Tibial artery (tissue), 4 donors: ENCODE measurements at regions of chr4 and their contacts with region 1.

Region 1: GRCh38 chr4:86593688-86594558 is at the start of gene PTPN13:
- DNase-seq: peak; percentile 98 to 99
- H3K4me3 ChIP-seq: peak within 1 kb of the TSS; percentile 71 to 84
- H3K27ac ChIP-seq: peak within 1 kb of the TSS; percentile 84 to 90
- H3K4me1 ChIP-seq: peaks cover 0 to 36% (median 5%) of the 10 kb centered on the region in 4 donors
- H3K27me3 ChIP-seq: no peaks in the 10 kb centered on the region
- CTCF ChIP-seq: no peak

Region 2: GRCh38 chr4:86184901-86185285 is 409.0 kb before region 1 on chr4:
- intact Hi-C with region 1: no loop called
- DNase-seq: no peak
- H3K4me3 ChIP-seq: no peak overlapping the region
- H3K27ac ChIP-seq: no peak overlapping the region
- H3K4me1 ChIP-seq: no peaks in the 10 kb centered on the region
- H3K27me3 ChIP-seq: no peaks in the 10 kb centered on the region
- CTCF ChIP-seq: no peak

Region 3: GRCh38 chr4:86908251-86908657 is 314.3 kb after region 1 on chr4:
- intact Hi-C with region 1: loop called (anchors 10 kb)
- DNase-seq: no peak
- H3K4me3 ChIP-seq: no peak overlapping the region
- H3K27ac ChIP-seq: peak overlapping the region; percentile 56 to 60
- H3K4me1 ChIP-seq: peaks cover 0 to 25% (median 12%) of the 10 kb centered on the region in 4 donors
- H3K27me3 ChIP-seq: no peaks in the 10 kb centered on the region
- CTCF ChIP-seq: no peak